Caco-2 (cell line): ENCODE measurements at regions of chr1 and their contacts with region 1.

Region 1: DNA sequence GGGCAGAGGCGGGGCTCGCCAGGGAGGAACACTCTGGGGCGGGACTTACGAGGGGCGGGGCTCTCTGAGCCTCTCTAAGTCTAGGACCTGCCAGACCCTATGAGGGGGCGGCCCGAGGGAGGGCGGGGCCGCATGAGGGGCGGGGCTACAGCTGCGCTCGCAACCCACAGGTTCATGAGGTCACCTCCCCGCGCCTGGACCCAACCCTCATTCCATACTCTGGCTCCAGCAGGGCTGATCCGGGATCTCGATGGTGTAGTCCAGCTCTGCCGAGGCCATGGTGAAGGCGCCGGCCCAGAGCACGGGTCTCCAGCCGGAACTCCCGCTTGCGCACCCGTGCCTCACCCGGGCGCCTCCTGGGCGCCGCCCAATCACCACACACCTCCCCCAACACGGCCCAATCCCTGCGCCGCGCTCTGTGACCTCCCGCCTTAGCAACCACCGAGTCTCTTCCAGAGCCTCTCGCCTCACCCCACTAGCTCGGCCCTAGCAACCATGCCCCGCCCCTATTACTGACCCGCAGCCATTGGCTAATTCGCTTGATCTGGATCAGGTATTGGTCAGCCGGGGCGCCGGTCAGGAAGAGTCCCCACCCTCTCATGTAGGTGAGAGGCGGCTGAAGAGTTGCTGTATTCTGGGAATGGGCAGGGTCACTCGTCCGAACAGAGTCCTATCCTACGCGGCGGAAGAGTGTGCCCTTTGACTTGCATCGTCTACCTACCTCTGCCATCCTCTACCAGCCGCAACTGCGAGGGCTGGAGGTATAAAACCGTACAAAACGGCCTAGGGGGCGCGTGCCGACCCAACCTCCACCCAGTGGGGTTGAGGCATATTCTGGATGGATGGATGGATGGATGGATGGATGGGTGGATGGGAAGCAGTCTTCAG is at the starts of genes ARMH1 and TMEM53:
- DNase-seq: peak; percentile 97 to 99
- H3K4me3 ChIP-seq: peak within 1 kb of the TSS; percentile 73
- H3K4me3 Mint-ChIP-seq: peak within 1 kb of the TSS; percentile 75
- H3K27ac Mint-ChIP-seq: peak within 1 kb of the TSS; percentile 88
- H3K4me1 ChIP-seq: peaks cover 3% of the 10 kb centered on the region; the same call in 1 of the 2 replicates
- H3K4me1 Mint-ChIP-seq: no peaks in the 10 kb centered on the region
- H3K27me3 ChIP-seq: no peaks in the 10 kb centered on the region
- H3K27me3 Mint-ChIP-seq: no peaks in the 10 kb centered on the region
- CTCF ChIP-seq: peak in 1 of 2 experiments; percentile 4
- total RNA-seq, gene ARMH1: 0.37 TPM in 1 of 2 replicates, not detected in the other
- total RNA-seq, gene TMEM53: 3.5 and 4.4 TPM in 2 replicates

Region 2: GRCh38 chr1:44631647-44632539 is 42.5 kb before region 1 on chr1:
- CTCF ChIA-PET with region 1: no interaction called
- POLR2A ChIA-PET with region 1: interaction called, 11 read pairs
- intact Hi-C with region 1: loop called (anchors 1 kb)
- DNase-seq: peak; percentile 87
- H3K4me3 ChIP-seq: peak overlapping the region; percentile 77
- H3K4me3 Mint-ChIP-seq: peak overlapping the region; percentile 86
- H3K27ac Mint-ChIP-seq: peak overlapping the region; percentile 94
- H3K4me1 ChIP-seq: 0 out of 2 replicates have a peak, but pooled peaks cover 4% of the 10 kb centered on the region
- H3K4me1 Mint-ChIP-seq: peaks cover 8% of the 10 kb centered on the region
- H3K27me3 ChIP-seq: no peaks in the 10 kb centered on the region
- H3K27me3 Mint-ChIP-seq: no peaks in the 10 kb centered on the region
- CTCF ChIP-seq: no peak

Region 3: GRCh38 chr1:44652445-44653106 is 21.8 kb before region 1 on chr1:
- CTCF ChIA-PET with region 1: interaction called, 11 read pairs
- POLR2A ChIA-PET with region 1: interaction called, 8 read pairs
- intact Hi-C with region 1: loop called (anchors 1 kb)
- DNase-seq: peak; percentile 62 to 75
- H3K4me3 ChIP-seq: no peak overlapping the region
- H3K4me3 Mint-ChIP-seq: no peak overlapping the region
- H3K27ac Mint-ChIP-seq: no peak overlapping the region
- H3K4me1 ChIP-seq: no peaks in the 10 kb centered on the region
- H3K4me1 Mint-ChIP-seq: no peaks in the 10 kb centered on the region
- H3K27me3 ChIP-seq: no peaks in the 10 kb centered on the region
- H3K27me3 Mint-ChIP-seq: no peaks in the 10 kb centered on the region
- CTCF ChIP-seq: peak; percentile 80 to 90

Region 4: DNA sequence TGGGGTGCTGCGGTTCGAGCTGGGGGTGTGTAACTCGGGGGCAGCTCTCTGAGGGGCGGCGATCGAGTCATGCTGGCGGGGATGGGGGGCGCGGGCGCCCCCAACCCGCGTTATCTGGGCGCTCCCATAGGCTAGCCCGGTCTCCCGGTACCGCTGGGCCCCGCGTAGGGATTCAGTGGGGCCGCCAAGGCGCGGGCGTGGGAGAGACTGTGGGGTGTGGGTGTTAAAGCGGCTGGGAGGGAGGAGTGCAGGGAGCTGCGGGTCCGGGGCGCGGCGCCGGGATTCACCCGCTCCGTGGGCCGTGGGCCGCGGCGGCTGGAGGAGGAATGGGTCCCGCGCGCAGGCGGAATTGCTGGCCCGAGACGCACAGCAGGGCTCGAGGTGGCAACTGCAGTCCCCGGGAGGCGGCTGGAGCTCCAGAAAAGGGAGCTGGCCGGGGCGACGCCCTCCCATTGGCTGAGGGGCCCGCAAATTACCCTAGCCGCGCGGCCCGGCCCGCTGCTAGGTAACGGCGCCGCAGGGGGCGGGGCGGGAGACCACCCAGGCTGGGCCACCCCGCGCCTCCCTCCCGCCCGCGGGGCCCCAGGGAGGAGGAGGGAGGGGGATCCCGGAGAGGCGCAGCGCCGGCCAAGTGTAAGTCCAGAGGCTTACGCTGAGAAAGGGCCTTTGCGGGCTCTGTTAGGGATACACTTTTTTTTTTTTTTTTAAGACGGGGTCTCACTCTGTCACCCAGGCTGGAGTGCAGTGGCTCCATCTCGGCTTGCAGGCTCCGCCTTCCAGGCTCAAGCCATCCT is 168.7 kb after region 1 on chr1 and contains the start of gene PTCH2:
- CTCF ChIA-PET with region 1: no interaction called
- POLR2A ChIA-PET with region 1: no interaction called
- intact Hi-C with region 1: no loop called
- DNase-seq: peak; percentile 62 to 66
- H3K4me3 ChIP-seq: peak within 1 kb of the TSS; percentile 48
- H3K4me3 Mint-ChIP-seq: peak within 1 kb of the TSS; percentile 71
- H3K27ac Mint-ChIP-seq: no peak within 1 kb of the TSS
- H3K4me1 ChIP-seq: no peaks in the 10 kb centered on the region
- H3K4me1 Mint-ChIP-seq: no peaks in the 10 kb centered on the region
- H3K27me3 ChIP-seq: no peaks in the 10 kb centered on the region
- H3K27me3 Mint-ChIP-seq: no peaks in the 10 kb centered on the region
- CTCF ChIP-seq: no peak
- total RNA-seq, gene PTCH2: 0.44 and 0.48 TPM in 2 replicates

Region 5: DNA sequence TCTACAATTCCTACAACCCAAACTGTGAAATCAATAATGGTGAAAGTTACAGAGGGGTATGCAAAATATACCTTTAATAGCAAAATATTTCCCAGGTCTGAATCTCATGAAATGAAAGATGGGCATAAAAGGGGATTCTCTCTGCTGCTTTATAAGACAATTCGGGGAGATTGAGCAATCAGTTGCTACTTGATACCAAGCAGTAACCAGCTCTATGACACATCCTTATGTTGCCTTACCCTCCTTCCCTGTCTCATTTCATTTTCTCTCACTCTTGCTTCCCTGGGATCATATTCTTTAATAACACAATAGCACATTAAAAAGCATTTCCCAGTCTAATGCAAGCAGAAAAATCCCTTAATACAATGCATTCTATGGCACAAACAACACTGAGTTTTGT is 503.1 kb after region 1 on chr1:
- CTCF ChIA-PET with region 1: no interaction called
- POLR2A ChIA-PET with region 1: no interaction called
- intact Hi-C with region 1: no loop called
- DNase-seq: no peak
- H3K4me3 ChIP-seq: no peak overlapping the region
- H3K4me3 Mint-ChIP-seq: no peak overlapping the region
- H3K27ac Mint-ChIP-seq: no peak overlapping the region
- H3K4me1 ChIP-seq: 0 out of 2 replicates have a peak, but pooled peaks cover under 1% of the 10 kb centered on the region
- H3K4me1 Mint-ChIP-seq: no peaks in the 10 kb centered on the region
- H3K27me3 ChIP-seq: no peaks in the 10 kb centered on the region
- H3K27me3 Mint-ChIP-seq: no peaks in the 10 kb centered on the region
- CTCF ChIP-seq: no peak

Region 6: DNA sequence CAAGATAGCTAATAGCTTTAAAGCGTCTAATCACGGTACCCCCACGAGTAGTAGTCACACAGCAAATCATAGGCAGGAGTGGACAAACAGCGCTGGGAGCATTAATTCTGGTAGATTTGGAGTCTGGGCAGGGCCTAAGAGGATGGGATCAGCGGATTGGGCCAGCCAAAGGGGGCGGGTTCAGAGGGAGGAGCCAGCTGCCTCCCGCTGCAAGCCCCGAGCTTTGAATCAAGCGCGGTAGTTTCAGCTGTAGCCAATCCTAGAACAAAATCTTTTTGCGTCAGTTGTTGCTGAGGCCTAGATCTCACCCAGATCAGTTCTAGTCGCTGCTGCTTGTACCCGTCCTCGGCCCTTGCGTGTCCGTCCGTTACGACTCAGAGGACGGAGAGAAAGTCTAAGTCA is 908.9 kb after region 1 on chr1:
- CTCF ChIA-PET with region 1: no interaction called
- POLR2A ChIA-PET with region 1: no interaction called
- intact Hi-C with region 1: no loop called
- DNase-seq: peak; percentile 93 to 94
- H3K4me3 ChIP-seq: peak overlapping the region; percentile 86
- H3K4me3 Mint-ChIP-seq: peak overlapping the region; percentile 97
- H3K27ac Mint-ChIP-seq: peak overlapping the region; percentile 97
- H3K4me1 ChIP-seq: 0 out of 2 replicates have a peak, but pooled peaks cover 4% of the 10 kb centered on the region
- H3K4me1 Mint-ChIP-seq: no peaks in the 10 kb centered on the region
- H3K27me3 ChIP-seq: no peaks in the 10 kb centered on the region
- H3K27me3 Mint-ChIP-seq: no peaks in the 10 kb centered on the region
- CTCF ChIP-seq: no peak